ENCODE measurements at regions of chr11 and their contacts with region 1.

Region 1: GRCh38 chr11:3091791-3092602 is 34.8 kb upstream of the CARS1 start:
- DNase-seq: peak; percentile 49 to 87 (median 66)
- ATAC-seq: peak; percentile 93
- H3K4me3 ChIP-seq: no peak overlapping the region
- H3K4me3 Mint-ChIP-seq: no peak overlapping the region
- H3K27ac ChIP-seq: no peak overlapping the region
- H3K27ac Mint-ChIP-seq: no peak overlapping the region
- H3K4me1 ChIP-seq: peaks cover 6% of the 10 kb centered on the region
- H3K4me1 Mint-ChIP-seq: no peaks in the 10 kb centered on the region
- H3K27me3 ChIP-seq: peaks cover 0 to 3% of the 10 kb centered on the region in 2 experiments
- H3K27me3 Mint-ChIP-seq: no peaks in the 10 kb centered on the region
- CTCF ChIP-seq: peak; percentile 96

Region 2: DNA sequence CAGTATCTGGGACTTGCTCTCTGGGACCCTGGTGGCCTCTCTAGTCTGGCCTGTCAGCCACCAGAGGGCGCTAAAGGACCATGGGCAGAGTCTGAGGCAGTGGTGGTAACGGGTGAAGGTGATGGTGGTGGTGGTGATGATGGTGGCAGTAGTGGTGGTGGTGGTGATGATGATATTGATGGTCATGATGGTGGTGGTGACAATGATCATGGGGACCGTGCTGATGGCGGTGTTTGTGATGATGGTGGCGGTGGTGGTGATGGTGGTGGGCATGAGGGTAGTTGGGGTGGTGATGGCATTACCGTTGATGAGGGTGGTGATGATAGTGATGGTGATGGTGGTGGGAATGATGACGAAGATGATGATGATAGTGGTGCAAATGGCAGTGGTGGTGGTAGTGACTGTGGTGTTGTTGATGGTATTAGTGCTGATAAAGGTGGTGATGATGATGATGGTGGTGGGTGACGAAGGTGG is 663.6 kb before region 1 on chr11:
- CTCF ChIA-PET with region 1: no interaction called
- POLR2A ChIA-PET with region 1: no interaction called
- intact Hi-C with region 1: loop called (anchors 2 kb)
- DNase-seq: peak; percentile 80 to 94 (median 88)
- ATAC-seq: peak; percentile 97
- H3K4me3 ChIP-seq: no peak overlapping the region
- H3K4me3 Mint-ChIP-seq: no peak overlapping the region
- H3K27ac ChIP-seq: no peak overlapping the region
- H3K27ac Mint-ChIP-seq: no peak overlapping the region
- H3K4me1 ChIP-seq: peaks cover 3% of the 10 kb centered on the region
- H3K4me1 Mint-ChIP-seq: no peaks in the 10 kb centered on the region
- H3K27me3 ChIP-seq: no peaks in the 10 kb centered on the region
- H3K27me3 Mint-ChIP-seq: no peaks in the 10 kb centered on the region
- CTCF ChIP-seq: peak; percentile 86

Region 3: DNA sequence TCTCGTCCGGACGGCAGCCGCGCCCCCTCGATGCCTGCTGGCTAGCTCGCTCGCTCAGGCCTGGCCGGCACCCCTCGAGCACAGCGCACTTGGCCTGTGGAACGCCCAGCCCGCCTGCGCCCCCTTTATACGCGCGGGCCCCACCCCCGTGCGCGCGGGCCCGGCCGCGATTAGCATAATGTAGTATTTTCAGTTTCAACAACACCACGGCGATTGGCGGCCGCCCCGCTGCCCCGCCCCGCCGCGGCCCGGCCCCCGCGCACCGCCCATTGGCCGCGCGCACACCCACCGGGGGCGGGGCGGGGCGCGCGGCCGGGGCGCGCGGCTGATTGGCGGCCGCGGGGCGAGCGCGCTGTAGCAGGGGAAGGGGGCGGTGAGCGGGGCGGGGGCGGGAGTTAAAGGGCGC is 206.3 kb before region 1 on chr11 and contains the start of gene CDKN1C:
- CTCF ChIA-PET with region 1: interaction called, 3 read pairs
- POLR2A ChIA-PET with region 1: no interaction called
- intact Hi-C with region 1: loop called in 1 of 2 experiments (anchors 2 kb)
- DNase-seq: peak; percentile 68 to 95 (median 82)
- ATAC-seq: peak; percentile 87
- H3K4me3 ChIP-seq: peak within 1 kb of the TSS; percentile 84
- H3K4me3 Mint-ChIP-seq: peak within 1 kb of the TSS; percentile 96
- H3K27ac ChIP-seq: no peak within 1 kb of the TSS
- H3K27ac Mint-ChIP-seq: peak within 1 kb of the TSS; percentile 77
- H3K4me1 ChIP-seq: peaks cover 41% of the 10 kb centered on the region
- H3K4me1 Mint-ChIP-seq: peaks cover 19% of the 10 kb centered on the region
- H3K27me3 ChIP-seq: peaks cover 0 to 4% of the 10 kb centered on the region in 2 experiments
- H3K27me3 Mint-ChIP-seq: no peaks in the 10 kb centered on the region
- CTCF ChIP-seq: no peak
- total RNA-seq, gene CDKN1C: 1.9 to 2.5 TPM

Region 4: DNA sequence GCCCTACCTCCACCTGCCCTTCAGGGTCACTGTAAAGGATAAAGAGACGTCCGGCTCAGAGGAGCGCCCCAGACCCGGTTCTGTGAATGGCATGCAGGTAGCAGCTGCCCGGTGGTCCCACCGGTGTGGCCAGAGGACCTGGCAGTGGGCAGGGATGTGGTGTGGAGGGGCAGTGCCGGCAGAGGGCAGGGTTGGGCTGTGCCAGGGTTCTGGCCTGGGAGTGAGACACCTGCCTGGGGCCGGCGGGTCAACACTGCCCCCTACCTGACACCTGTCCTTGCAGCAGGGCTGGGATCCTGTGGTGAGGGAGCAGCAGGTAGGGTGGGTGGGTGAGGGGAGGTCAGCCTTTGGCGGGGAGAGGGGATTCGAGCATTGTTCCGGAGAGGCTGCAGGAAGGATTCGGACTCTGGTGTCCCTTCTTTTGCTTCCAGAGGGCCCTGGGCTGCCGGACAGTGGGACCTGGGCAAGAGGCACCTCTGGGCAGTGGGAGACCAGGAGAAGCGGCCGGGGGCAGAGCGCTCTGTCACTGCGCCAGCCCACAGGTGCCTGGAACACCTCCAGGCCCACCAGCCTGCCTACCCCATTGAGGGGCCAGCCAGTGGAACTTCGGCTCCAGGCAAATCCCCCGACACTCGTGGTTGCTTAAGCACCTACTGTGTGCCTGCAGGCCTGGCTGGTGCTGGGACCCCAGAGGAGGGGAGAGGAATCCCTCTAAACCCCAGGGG is 161.1 kb before region 1 on chr11:
- CTCF ChIA-PET with region 1: no interaction called
- POLR2A ChIA-PET with region 1: no interaction called
- intact Hi-C with region 1: loop called in 1 of 2 experiments (anchors 2 kb)
- DNase-seq: peak in 11 of 14 experiments; percentile 24 to 70 (median 45)
- ATAC-seq: no peak
- H3K4me3 ChIP-seq: peak overlapping the region; percentile 55
- H3K4me3 Mint-ChIP-seq: peak overlapping the region; percentile 85
- H3K27ac ChIP-seq: no peak overlapping the region
- H3K27ac Mint-ChIP-seq: no peak overlapping the region
- H3K4me1 ChIP-seq: peaks cover 48% of the 10 kb centered on the region
- H3K4me1 Mint-ChIP-seq: peaks cover 24% of the 10 kb centered on the region
- H3K27me3 ChIP-seq: peaks cover 21 to 24% of the 10 kb centered on the region in 2 experiments
- H3K27me3 Mint-ChIP-seq: peaks cover 30% of the 10 kb centered on the region
- CTCF ChIP-seq: peak; percentile 56

Region 5: DNA sequence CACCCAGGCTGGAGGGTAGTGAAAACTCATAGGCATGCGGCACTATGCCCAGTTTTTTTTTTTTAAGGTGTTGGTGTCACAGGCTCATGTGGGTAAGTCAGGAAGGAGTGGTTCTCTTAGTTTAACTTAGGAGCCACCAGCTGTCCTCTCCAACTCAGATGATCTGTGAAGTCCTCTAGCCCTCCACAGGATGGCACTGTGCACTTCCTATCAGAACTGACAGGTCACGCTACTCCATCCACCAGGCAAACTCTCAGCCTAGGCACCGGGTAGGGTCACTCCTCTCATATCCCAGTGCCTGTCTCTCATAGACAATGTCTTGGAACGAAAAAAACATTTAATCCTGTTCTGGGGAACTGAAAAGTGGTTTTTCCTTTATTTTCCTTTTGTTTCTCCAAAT is 116.4 kb before region 1 on chr11:
- CTCF ChIA-PET with region 1: interaction called, 13 read pairs
- POLR2A ChIA-PET with region 1: interaction called, 5 read pairs
- intact Hi-C with region 1: loop called (anchors 1 kb)
- DNase-seq: peak; percentile 25 to 78 (median 48)
- ATAC-seq: peak; percentile 97
- H3K4me3 ChIP-seq: no peak overlapping the region
- H3K4me3 Mint-ChIP-seq: no peak overlapping the region
- H3K27ac ChIP-seq: no peak overlapping the region
- H3K27ac Mint-ChIP-seq: no peak overlapping the region
- H3K4me1 ChIP-seq: peaks cover 13% of the 10 kb centered on the region
- H3K4me1 Mint-ChIP-seq: peaks cover 38% of the 10 kb centered on the region
- H3K27me3 ChIP-seq: no peaks in the 10 kb centered on the region
- H3K27me3 Mint-ChIP-seq: no peaks in the 10 kb centered on the region
- CTCF ChIP-seq: peak; percentile 56

Region 6: GRCh38 chr11:3037040-3037944 is 54.7 kb before region 1 on chr11:
- CTCF ChIA-PET with region 1: interaction called, 22 read pairs
- POLR2A ChIA-PET with region 1: interaction called, 9 read pairs
- intact Hi-C with region 1: loop called in 1 of 2 experiments (anchors 1 kb)
- DNase-seq: peak in 12 of 14 experiments; percentile 22 to 72 (median 38)
- ATAC-seq: peak; percentile 89
- H3K4me3 ChIP-seq: no peak overlapping the region
- H3K4me3 Mint-ChIP-seq: no peak overlapping the region
- H3K27ac ChIP-seq: no peak overlapping the region
- H3K27ac Mint-ChIP-seq: peak overlapping the region; percentile 63
- H3K4me1 ChIP-seq: peaks cover 19% of the 10 kb centered on the region
- H3K4me1 Mint-ChIP-seq: peaks cover 30% of the 10 kb centered on the region
- H3K27me3 ChIP-seq: no peaks in the 10 kb centered on the region
- H3K27me3 Mint-ChIP-seq: no peaks in the 10 kb centered on the region
- CTCF ChIP-seq: peak; percentile 67

Region 7: DNA sequence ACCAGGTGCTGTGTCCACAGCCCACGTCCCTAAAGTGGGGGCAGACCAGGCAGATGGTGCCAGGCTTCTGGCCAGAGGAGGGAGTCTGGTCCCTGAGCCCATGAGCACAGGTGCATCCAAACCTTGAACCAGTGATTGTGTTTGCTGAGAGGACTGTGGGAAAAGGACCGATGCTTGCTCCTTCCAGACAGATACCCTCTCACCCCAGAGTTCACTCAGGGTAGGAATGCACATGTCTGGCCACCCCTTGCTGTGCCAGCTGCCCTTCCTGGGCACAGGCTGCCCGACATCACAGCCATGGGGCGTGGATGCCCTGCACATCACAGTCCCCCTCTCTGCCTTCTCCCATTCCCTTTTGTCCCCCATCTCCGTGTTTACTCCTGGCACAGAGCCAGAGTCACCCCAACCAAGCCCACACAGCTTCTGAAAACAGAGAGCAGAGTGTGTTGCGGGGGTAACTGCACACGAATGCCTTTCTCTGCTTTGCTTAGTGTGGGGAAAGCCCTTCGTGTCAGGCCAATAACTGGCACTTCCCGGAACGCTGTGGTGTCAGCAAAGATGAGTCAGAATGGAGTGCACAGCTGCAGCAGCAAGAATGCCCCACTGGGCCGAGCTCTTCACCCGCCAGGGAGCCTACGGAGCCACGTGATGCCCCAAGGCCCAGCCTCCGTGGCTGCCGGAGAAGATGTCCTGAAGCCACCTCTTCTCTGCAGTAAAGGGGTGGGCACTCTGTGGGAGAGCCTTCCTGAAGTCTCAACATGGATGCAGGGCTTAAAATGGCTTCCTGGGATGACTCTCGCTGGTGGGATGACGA is 42.4 kb before region 1 on chr11:
- CTCF ChIA-PET with region 1: interaction called, 24 read pairs
- POLR2A ChIA-PET with region 1: interaction called, 4 read pairs
- intact Hi-C with region 1: no loop called
- DNase-seq: peak; percentile 42 to 92 (median 56)
- ATAC-seq: peak; percentile 96
- H3K4me3 ChIP-seq: no peak overlapping the region
- H3K4me3 Mint-ChIP-seq: no peak overlapping the region
- H3K27ac ChIP-seq: peak overlapping the region in 1 of 2 donors; percentile 23
- H3K27ac Mint-ChIP-seq: peak overlapping the region; percentile 86
- H3K4me1 ChIP-seq: peaks cover 61% of the 10 kb centered on the region
- H3K4me1 Mint-ChIP-seq: peaks cover 37% of the 10 kb centered on the region
- H3K27me3 ChIP-seq: no peaks in the 10 kb centered on the region
- H3K27me3 Mint-ChIP-seq: no peaks in the 10 kb centered on the region
- CTCF ChIP-seq: no peak

Region 8: DNA sequence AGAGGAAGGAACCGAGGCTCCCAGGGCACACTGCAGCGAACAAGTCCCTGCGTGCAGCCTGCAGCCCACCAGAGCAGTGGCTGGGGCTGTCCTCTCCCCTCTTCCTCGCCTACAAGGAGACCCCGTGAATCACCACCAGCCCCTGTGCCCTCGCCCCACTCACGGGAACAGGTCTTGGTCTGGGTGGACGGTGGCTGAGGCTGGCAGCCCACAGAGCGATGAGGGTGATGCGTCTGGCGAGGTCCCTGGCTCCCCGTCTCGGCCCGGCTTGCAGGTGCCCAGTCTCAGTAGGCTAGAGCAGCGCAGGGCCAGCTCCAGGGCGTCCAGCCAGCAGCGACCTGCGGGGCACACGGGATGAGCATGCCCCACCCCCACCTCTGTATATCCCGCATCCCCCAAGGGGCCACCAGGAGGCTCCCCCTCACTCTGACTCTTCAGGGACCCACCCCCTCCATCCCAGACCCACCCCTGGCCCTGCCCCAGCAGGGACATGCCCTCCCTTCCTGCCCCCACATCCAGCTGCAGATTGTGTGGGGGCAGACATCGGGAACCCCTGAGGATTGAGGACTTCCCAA is 15.7 kb after region 1 on chr11:
- CTCF ChIA-PET with region 1: no interaction called
- POLR2A ChIA-PET with region 1: no interaction called
- intact Hi-C with region 1: no loop called
- DNase-seq: peak in 1 of 14 experiments; percentile 26
- ATAC-seq: no peak
- H3K4me3 ChIP-seq: no peak overlapping the region
- H3K4me3 Mint-ChIP-seq: no peak overlapping the region
- H3K27ac ChIP-seq: no peak overlapping the region
- H3K27ac Mint-ChIP-seq: no peak overlapping the region
- H3K4me1 ChIP-seq: no peaks in the 10 kb centered on the region
- H3K4me1 Mint-ChIP-seq: no peaks in the 10 kb centered on the region
- H3K27me3 ChIP-seq: no peaks in the 10 kb centered on the region
- H3K27me3 Mint-ChIP-seq: no peaks in the 10 kb centered on the region
- CTCF ChIP-seq: no peak

Region 9: DNA sequence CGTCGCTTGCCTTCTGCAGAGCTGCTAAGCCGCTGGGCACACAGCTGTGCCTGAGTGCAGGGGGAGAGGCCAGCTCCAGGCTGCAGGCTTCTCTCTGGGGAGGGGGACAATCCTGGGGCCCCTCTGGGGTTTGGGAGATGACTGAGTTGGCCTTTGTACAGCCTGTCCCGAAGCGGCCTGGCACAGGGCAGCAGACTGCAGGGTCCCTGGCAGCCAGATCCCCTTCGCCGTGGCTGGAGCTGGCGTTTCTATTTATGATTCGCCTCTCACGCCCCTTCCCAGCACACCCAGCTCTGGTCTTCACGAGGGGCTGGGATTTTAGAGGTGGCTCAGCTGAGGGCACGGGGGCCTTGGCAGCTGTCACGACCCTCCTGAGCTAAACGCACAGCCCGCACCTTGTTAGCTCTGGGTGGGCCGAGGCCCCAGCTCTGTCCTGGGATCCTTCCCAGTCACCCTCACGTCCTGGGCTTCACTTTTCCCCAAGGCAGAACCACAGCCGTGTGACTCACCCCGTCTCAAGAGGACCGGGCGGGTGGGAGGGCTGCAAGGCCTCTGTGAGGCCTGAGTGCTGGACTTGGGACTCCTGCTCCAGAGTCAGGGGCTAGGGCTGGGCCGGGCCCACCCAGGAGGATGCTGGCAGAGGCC is 54.7 kb after region 1 on chr11:
- CTCF ChIA-PET with region 1: no interaction called
- POLR2A ChIA-PET with region 1: no interaction called
- intact Hi-C with region 1: no loop called
- DNase-seq: no peak
- ATAC-seq: no peak
- H3K4me3 ChIP-seq: no peak overlapping the region
- H3K4me3 Mint-ChIP-seq: no peak overlapping the region
- H3K27ac ChIP-seq: no peak overlapping the region
- H3K27ac Mint-ChIP-seq: no peak overlapping the region
- H3K4me1 ChIP-seq: no peaks in the 10 kb centered on the region
- H3K4me1 Mint-ChIP-seq: peaks cover 3% of the 10 kb centered on the region
- H3K27me3 ChIP-seq: no peaks in the 10 kb centered on the region
- H3K27me3 Mint-ChIP-seq: no peaks in the 10 kb centered on the region
- CTCF ChIP-seq: no peak

Measured in CD4-positive, alpha-beta T cell (primary cell).